WTC11 (cell line): ENCODE measurements at regions of chr3 and their contacts with region 1.

Region 1: DNA sequence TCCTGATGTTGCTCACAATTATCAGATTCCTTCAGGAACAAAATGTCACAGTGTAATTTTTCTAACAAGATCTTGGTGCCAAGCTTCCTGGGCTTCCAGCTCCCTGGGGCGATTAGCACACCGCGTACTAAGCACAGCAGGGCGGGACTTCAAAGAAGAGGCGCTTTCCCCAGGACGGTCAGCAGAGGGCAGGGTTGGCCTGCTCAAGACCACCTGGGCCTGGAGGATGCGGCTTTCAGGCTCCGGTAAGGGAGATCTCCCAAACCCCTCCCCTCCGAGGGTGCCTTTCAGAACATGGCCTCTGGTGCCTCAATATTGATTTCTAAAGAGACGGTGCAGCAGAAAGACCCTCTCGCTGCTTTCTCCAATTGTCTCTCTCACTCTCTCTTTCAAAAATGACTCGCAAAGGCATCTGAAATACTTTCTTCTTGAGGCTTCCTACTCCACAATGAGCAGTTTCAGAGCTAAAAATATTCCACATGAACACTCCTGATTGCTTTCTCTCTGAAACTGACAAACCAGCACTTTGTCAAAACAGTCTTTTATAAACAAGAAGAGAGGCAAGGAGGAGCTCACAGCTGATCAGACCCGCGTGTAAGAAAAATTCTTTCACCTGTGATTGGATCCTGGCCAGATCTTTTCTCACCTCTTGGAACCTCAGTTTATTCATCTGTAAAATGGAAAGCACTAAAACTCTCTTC is 154.0 kb downstream of the ADAMTS9 start:
- DNase-seq: peak; percentile 91
- ATAC-seq: peak; percentile 98
- H3K4me3 Mint-ChIP-seq: no peak overlapping the region
- H3K27ac Mint-ChIP-seq: no peak overlapping the region
- H3K4me1 Mint-ChIP-seq: peaks cover 5% of the 10 kb centered on the region
- H3K27me3 Mint-ChIP-seq: peaks cover 33% of the 10 kb centered on the region
- CTCF ChIP-seq: peak; percentile 75

Region 2: DNA sequence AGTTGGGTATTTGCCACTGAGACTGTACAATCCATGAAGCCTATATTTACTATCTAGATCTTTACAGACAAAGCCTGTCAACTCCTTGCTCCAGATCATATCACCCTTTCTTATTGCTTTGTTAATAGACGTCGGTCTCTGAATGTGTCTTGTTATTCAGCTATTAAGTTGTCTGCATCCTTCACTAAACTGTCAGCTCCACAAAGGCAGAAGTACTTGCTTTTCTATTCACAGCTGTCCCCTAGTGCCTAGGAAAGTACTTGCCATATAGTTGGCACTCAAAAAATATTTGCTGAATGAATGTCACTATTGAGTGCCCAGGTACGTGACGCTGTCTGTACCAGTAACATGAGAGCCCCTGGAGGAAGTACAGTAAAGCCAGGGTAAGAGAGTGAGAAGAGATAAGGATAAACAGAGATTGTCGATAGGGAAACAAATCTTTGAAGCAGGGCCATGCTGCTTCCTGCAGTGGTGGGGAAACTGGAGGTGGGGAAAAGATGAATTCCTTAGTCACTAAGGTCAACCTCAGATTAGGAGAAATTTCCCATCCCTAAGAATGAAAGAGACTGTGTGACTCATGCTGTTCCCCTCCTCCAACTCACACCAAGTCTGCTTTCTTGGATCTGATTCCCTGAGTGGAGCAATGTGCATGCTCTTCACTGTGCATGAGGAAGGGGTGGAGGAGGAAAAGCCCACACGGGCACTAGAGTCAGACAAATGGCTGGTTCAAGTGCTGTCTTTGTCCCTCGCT is 344.8 kb before region 1 on chr3:
- CTCF ChIA-PET with region 1: no interaction called
- POLR2A ChIA-PET with region 1: no interaction called
- DNase-seq: no peak
- ATAC-seq: peak; percentile 32; the same call in 1 of the 2 replicates
- H3K4me3 Mint-ChIP-seq: no peak overlapping the region
- H3K27ac Mint-ChIP-seq: 0 out of 2 replicates have a peak overlapping the region, but pooled peaks have one; percentile 3
- H3K4me1 Mint-ChIP-seq: peaks cover 10% of the 10 kb centered on the region
- H3K27me3 Mint-ChIP-seq: peaks cover 4% of the 10 kb centered on the region; the same call in 1 of the 2 replicates
- CTCF ChIP-seq: no peak

Region 3: DNA sequence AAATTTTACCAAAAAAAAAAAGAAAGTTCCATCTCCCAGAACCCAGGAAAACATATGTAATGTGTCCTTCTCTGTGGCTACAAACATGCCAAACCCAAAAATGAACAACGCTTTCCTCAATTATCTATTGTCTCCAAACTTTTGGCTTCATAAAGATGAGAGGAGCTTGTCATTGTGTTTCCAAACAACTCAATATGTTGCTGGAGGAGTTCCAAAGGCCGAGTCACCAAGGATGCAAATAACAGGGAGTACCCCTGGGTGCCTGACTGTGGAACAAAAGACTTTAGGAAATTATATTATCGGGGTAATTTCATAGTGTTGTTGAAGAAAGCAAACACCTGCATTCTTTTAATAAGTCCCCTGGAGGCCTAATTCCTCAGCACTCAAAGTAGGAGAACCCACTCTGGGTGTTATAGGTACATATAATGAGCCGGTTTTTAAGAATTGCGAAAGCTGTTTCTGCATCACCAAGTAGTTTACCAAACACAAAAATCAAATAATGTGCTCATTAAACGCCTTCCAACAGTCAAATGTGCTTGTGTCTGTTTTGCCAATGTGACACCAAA is 102.2 kb before region 1 on chr3:
- CTCF ChIA-PET with region 1: no interaction called
- POLR2A ChIA-PET with region 1: no interaction called
- DNase-seq: no peak
- ATAC-seq: no peak
- H3K4me3 Mint-ChIP-seq: no peak overlapping the region
- H3K27ac Mint-ChIP-seq: no peak overlapping the region; the same call in 1 of the 2 replicates
- H3K4me1 Mint-ChIP-seq: peaks cover 18% of the 10 kb centered on the region
- H3K27me3 Mint-ChIP-seq: no peaks in the 10 kb centered on the region; the same call in 1 of the 2 replicates
- CTCF ChIP-seq: no peak

Region 4: GRCh38 chr3:64518950-64519349 is 14.8 kb before region 1 on chr3:
- CTCF ChIA-PET with region 1: interaction called, 18 read pairs
- POLR2A ChIA-PET with region 1: no interaction called
- DNase-seq: no peak
- ATAC-seq: no peak
- H3K4me3 Mint-ChIP-seq: no peak overlapping the region
- H3K27ac Mint-ChIP-seq: no peak overlapping the region
- H3K4me1 Mint-ChIP-seq: peaks cover 11% of the 10 kb centered on the region
- H3K27me3 Mint-ChIP-seq: no peaks in the 10 kb centered on the region
- CTCF ChIP-seq: no peak

Region 5: GRCh38 chr3:64575211-64575844 is 41.6 kb after region 1 on chr3:
- CTCF ChIA-PET with region 1: interaction called, 11 read pairs
- POLR2A ChIA-PET with region 1: no interaction called
- DNase-seq: peak; percentile 24
- ATAC-seq: peak; percentile 94
- H3K4me3 Mint-ChIP-seq: no peak overlapping the region
- H3K27ac Mint-ChIP-seq: no peak overlapping the region
- H3K4me1 Mint-ChIP-seq: peaks cover 31% of the 10 kb centered on the region
- H3K27me3 Mint-ChIP-seq: no peaks in the 10 kb centered on the region; the same call in 1 of the 2 replicates
- CTCF ChIP-seq: peak; percentile 77

Region 6: DNA sequence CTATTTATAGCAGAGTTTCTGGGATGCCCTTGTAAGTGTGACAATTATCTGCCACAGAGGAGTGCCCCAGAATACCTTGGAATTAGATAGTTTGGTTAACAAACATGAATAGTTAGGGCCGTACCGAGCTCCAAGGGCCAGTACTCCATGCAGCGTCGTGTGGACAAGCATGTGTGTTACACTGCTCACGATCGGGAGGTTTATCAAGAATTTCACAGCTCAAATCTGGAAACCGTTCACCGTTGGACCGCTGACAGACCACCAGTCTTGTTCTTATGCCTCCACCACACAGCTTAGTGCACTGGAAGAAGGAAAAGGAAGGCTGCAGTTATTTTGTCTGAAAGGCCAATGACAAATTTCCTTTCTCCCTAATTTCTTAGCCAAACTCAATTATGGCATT is 60.4 kb after region 1 on chr3:
- CTCF ChIA-PET with region 1: interaction called, 10 read pairs
- POLR2A ChIA-PET with region 1: no interaction called
- DNase-seq: no peak
- ATAC-seq: no peak
- H3K4me3 Mint-ChIP-seq: no peak overlapping the region
- H3K27ac Mint-ChIP-seq: no peak overlapping the region
- H3K4me1 Mint-ChIP-seq: no peaks in the 10 kb centered on the region
- H3K27me3 Mint-ChIP-seq: peaks cover 2% of the 10 kb centered on the region; the same call in 1 of the 2 replicates
- CTCF ChIP-seq: no peak

Region 7: DNA sequence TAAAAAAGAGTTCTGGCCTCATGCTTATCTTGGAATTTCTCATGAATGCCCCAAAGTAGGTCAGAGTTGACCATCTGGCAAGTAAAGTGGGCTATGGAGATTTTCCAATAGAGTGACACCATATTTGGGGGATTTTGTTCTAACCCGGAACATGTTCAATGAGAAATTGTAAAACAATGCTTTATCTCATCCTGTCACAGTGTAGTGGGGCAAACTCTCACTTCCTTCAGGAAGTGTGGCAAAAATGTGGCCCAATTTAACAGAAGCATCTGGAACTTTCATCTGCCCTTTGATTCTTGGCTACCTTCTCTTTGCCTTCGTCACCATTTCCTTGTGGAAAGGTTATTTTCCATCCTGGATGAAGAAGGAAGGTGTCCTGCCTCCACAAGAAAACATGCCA is 83.2 kb after region 1 on chr3:
- CTCF ChIA-PET with region 1: no interaction called
- POLR2A ChIA-PET with region 1: no interaction called
- DNase-seq: no peak
- ATAC-seq: no peak
- H3K4me3 Mint-ChIP-seq: no peak overlapping the region
- H3K27ac Mint-ChIP-seq: no peak overlapping the region
- H3K4me1 Mint-ChIP-seq: no peaks in the 10 kb centered on the region
- H3K27me3 Mint-ChIP-seq: no peaks in the 10 kb centered on the region
- CTCF ChIP-seq: no peak

Region 8: DNA sequence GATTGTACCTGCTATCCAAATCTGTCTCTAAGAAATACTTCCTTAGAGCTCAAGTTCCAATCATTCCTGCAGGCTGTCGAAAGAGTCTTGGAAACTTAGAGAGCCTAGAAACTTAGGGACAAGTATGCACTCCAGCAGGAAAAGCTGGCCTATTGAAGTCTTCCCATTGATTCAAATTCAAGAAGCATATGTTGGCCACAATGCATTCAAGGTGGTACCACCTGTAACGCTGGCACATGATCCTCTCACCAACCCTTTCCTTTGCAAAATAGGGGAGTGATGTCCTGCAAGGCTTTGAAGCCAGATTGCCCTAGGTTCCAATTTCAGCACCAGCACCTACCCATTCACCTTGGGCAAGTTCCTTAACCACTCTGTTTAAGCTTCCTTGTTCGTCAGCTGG is 148.1 kb after region 1 on chr3:
- CTCF ChIA-PET with region 1: interaction called, 13 read pairs
- POLR2A ChIA-PET with region 1: interaction called, 3 read pairs
- DNase-seq: no peak
- ATAC-seq: 0 out of 2 replicates have a peak, but pooled peaks have one; percentile 0
- H3K4me3 Mint-ChIP-seq: peak overlapping the region; percentile 12; the same call in 1 of the 2 replicates
- H3K27ac Mint-ChIP-seq: no peak overlapping the region
- H3K4me1 Mint-ChIP-seq: peaks cover 73% of the 10 kb centered on the region
- H3K27me3 Mint-ChIP-seq: peaks cover 96% of the 10 kb centered on the region
- CTCF ChIP-seq: no peak

Region 9: GRCh38 chr3:65026151-65026550 is 492.4 kb after region 1 on chr3:
- CTCF ChIA-PET with region 1: interaction called, 13 read pairs
- POLR2A ChIA-PET with region 1: no interaction called
- DNase-seq: no peak
- ATAC-seq: no peak
- H3K4me3 Mint-ChIP-seq: no peak overlapping the region
- H3K27ac Mint-ChIP-seq: peak overlapping the region; percentile 0; the same call in 1 of the 2 replicates
- H3K4me1 Mint-ChIP-seq: peaks cover 29% of the 10 kb centered on the region
- H3K27me3 Mint-ChIP-seq: no peaks in the 10 kb centered on the region
- CTCF ChIP-seq: no peak

Region 10: DNA sequence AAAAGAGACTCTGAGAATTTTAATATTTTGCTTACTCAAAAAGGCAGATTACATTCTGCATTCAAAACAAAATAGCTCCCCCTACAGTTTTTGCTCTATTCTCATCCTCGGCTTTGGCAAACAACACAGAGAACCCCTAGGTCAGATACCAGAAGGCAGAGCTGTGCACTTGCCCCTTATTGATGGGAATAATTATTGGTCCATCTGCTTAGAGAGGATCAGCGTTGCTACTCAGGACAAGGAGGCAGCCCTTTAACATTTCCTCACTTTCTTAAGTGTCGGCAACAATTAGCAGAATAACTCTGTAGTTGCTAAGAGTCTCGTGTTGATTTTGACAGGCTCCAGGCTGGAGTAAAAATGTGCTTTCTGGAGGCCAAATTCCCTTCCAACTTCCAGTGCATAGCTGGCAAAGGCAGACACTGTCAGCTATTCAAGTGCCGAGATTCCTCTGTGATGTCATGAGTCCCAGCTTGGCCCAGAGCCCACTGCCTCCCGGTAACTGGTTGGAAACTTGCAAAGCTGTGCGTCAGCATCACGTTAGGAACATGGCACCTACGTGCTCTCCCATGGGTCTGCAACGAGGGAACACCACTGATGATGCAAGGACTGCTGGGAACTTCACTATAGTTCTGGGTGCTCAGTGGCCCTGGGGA is 636.7 kb after region 1 on chr3:
- CTCF ChIA-PET with region 1: interaction called, 16 read pairs
- POLR2A ChIA-PET with region 1: no interaction called
- DNase-seq: no peak
- ATAC-seq: peak; percentile 81
- H3K4me3 Mint-ChIP-seq: no peak overlapping the region
- H3K27ac Mint-ChIP-seq: peak overlapping the region; percentile 60; the same call in 1 of the 2 replicates
- H3K4me1 Mint-ChIP-seq: peaks cover 6% of the 10 kb centered on the region
- H3K27me3 Mint-ChIP-seq: peaks cover 3% of the 10 kb centered on the region
- CTCF ChIP-seq: no peak; the same call in 1 of the 2 replicates